ENCODE measurements at regions of chr5 and their contacts with region 1.

Region 1: DNA sequence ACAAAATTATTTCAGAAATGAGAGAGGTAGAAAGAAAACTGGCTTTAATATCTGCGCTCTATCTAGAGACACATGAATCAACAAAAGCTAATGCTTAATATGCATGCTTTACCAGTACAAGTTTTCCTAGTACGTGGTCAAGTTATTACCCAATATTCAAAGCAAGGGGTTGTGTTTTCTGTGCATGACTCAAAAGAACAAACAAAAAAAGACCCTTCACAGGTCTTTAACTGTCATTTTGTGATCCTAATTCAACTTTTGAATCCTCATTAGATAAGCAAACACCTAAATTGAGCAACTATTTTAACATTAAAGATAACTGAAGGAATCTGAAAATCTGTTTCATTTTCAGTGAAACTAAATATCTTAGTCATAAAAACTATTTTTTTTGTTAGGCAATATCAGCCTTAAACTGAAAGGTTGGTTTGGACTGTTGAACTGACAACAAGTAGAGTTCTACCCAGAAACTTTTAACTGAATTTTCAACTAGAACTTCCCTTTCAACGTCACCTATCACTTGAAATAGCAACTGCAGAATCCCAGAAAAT is 12.5 kb downstream of the ST8SIA4 start:
- DNase-seq: peak in 1 of 3 donors; percentile 42
- H3K4me3 ChIP-seq: peak overlapping the region in 5 of 7 experiments; percentile 14 to 75 (median 52)
- H3K27ac ChIP-seq: peak overlapping the region; percentile 80 to 83
- H3K4me1 ChIP-seq: peaks cover 4 to 25% (median 20%) of the 10 kb centered on the region in 4 experiments
- H3K27me3 ChIP-seq: no peaks in the 10 kb centered on the region

Region 2: GRCh38 chr5:100900796-100901781 is 10.6 kb after region 1 on chr5:
- CTCF ChIA-PET with region 1: interaction called, 12 read pairs
- POLR2A ChIA-PET with region 1: interaction called, 6 read pairs
- DNase-seq: peak; percentile 98 to 100 (median 99)
- H3K4me3 ChIP-seq: peak overlapping the region; percentile 75 to 100 (median 91)
- H3K27ac ChIP-seq: peak overlapping the region; percentile 92 to 95
- H3K4me1 ChIP-seq: peaks cover 23 to 66% (median 42%) of the 10 kb centered on the region in 4 experiments
- H3K27me3 ChIP-seq: no peaks in the 10 kb centered on the region

Measured in common myeloid progenitor, CD34-positive (primary cell).